ENCODE measurements at regions of chr2 and their contacts with region 1.

Region 1: DNA sequence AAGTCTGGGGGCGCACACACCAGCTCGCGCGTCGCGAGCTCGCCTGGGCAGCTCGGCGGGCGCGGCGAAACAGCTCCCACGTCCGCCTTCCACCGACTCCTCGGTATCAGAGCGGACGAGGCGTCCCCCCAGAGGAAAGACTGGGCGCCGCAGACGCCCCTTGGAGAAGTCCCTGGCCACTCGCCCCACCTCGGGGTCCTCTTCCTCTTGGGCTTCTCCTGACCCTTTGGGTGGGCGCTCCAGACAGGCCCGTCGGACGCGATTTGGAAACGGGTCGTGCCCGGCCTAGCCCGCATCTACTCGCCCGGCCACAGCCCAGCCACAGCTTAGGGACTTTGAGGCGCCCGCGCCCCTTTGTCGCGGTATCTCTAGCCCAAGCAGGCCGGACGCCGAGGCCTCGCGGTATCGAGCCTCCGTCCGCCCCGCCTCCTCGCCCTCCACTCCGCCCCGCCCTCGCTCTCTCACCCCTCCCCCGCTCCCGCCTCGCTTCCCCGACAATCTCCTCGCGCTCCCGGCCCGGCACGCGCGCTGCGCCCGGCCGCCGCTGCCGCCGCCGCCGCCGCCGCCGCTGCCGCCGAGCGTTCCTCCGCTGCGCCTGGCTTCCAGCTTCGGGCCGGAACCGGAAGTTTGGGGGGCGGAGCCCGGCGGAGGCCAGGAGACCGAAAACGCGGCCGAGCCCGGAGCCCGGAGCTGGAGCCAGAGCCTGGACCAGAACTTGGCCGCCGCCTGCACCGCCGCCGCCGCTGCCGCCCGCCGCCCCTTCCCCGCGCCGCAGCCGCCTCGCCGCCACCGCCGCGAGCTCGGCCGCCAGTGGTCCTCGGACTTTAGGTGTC is 749 bp upstream of the ACVR2A start:
- DNase-seq: peak; percentile 94
- ATAC-seq: peak; percentile 98

Region 2: GRCh38 chr2:147904044-147904443 is 60.0 kb after region 1 on chr2:
- intact Hi-C with region 1: loop called (anchors 10 kb)
- DNase-seq: no peak
- ATAC-seq: no peak

Measured in sciatic nerve (tissue), 2 donors.